PC-3 (cell line): ENCODE measurements at regions of chr14 and their contacts with region 1.

Region 1: DNA sequence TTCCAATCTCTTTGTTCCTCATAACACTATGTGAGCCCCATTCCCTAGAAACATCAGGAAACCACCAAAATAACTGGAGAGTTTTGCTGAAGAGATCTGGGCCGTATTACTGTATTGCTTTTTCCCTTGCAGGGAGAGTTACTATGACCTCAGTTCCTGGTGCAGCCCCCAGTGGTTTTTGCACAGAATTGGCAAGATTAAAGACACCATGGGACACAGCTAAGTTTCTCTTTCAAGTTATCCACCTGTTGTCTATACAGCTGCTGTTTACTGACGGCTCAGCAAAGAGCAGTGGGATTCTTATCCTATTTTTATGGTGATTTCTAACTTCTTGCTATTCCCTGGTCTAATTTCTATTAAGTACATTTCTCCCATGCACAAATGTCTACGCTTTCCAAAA is 77.1 kb upstream of the SLC35F4 start:
- DNase-seq: no peak
- ATAC-seq: no peak
- H3K4me3 ChIP-seq: no peak overlapping the region
- H3K27ac ChIP-seq: no peak overlapping the region
- H3K4me1 ChIP-seq: no peaks in the 10 kb centered on the region
- H3K27me3 ChIP-seq: peaks cover 80% of the 10 kb centered on the region
- CTCF ChIP-seq: no peak

Region 2: GRCh38 chr14:57640036-57640435 is 303.0 kb before region 1 on chr14:
- CTCF ChIA-PET with region 1: no interaction called
- POLR2A ChIA-PET with region 1: no interaction called
- intact Hi-C with region 1: no loop called
- DNase-seq: no peak
- ATAC-seq: no peak
- H3K4me3 ChIP-seq: no peak overlapping the region
- H3K27ac ChIP-seq: no peak overlapping the region
- H3K4me1 ChIP-seq: no peaks in the 10 kb centered on the region
- H3K27me3 ChIP-seq: peaks cover 15% of the 10 kb centered on the region
- CTCF ChIP-seq: no peak

Region 3: GRCh38 chr14:58808828-58809227 is 865.8 kb after region 1 on chr14:
- CTCF ChIA-PET with region 1: no interaction called
- POLR2A ChIA-PET with region 1: no interaction called
- intact Hi-C with region 1: loop called (anchors 5 kb)
- DNase-seq: peak; percentile 87
- ATAC-seq: peak; percentile 51
- H3K4me3 ChIP-seq: no peak overlapping the region
- H3K27ac ChIP-seq: no peak overlapping the region
- H3K4me1 ChIP-seq: peaks cover 7% of the 10 kb centered on the region
- H3K27me3 ChIP-seq: peaks cover 55% of the 10 kb centered on the region
- CTCF ChIP-seq: no peak